ENCODE measurements at regions of chr11 and their contacts with region 1.

Region 1: GRCh38 chr11:108871152-108871551 is 206.3 kb downstream of the DDX10 start:
- DNase-seq: peak; percentile 37
- ATAC-seq: peak; percentile 41

Region 2: DNA sequence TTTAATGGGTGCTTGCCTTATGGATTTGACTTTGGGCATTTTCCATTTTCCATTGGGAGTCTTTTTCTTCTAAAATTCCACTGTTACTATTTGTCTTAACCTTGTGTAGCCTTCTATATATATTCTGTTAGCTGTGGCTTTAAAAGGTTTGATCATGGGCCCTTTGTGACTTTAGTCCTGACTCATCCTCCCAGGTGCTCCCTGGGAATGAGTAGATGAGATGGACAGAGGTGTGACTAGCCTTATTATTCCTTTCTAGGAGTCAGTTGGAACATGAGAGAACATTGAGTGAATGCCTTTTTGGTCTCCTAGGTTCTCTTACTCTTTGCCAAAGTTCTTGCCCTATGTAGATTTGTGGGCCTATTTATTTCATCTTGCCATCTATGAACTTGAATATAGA is 167.2 kb before region 1 on chr11:
- intact Hi-C with region 1: loop called (anchors 10 kb)
- DNase-seq: no peak
- ATAC-seq: no peak